A673 (cell line): ENCODE measurements at regions of chr12 and their contacts with region 1.

Region 1: GRCh38 chr12:88993651-88994050 is 358.6 kb downstream of the DUSP6 start:
- DNase-seq: peak; percentile 64
- H3K4me3 ChIP-seq: no peak overlapping the region
- H3K27ac ChIP-seq: no peak overlapping the region
- H3K4me1 ChIP-seq: no peaks in the 10 kb centered on the region
- H3K27me3 ChIP-seq: no peaks in the 10 kb centered on the region
- CTCF ChIP-seq: peak; percentile 70

Region 2: DNA sequence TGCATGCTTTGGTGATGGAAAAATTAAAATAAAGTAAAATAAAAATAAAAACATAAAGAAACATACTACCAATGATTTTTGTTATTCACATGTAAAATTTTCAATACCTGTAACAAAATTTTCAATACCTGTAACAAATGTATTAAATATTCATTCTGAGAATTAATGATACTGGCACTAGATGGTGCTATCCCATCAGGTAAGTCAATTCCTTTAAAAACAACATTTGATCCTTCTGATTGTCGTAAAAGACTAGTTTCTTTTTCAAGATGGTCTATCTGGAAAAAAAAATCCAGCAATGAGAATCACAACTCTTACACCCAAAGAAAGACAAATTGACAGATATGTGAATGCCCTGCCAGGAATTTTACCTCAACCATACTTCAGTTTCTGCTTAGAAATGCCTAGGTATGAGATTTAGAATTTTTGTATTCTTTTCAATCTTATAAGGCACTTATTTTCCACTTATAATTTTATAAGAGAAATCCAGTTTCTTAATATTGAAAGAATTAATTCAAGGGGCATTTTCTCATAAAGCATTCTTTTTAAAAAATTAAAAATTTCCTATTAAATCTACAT is 882.5 kb before region 1 on chr12:
- CTCF ChIA-PET with region 1: no interaction called
- POLR2A ChIA-PET with region 1: no interaction called
- intact Hi-C with region 1: loop called (anchors 2 kb)
- DNase-seq: peak; percentile 49
- H3K4me3 ChIP-seq: no peak overlapping the region
- H3K27ac ChIP-seq: no peak overlapping the region
- H3K4me1 ChIP-seq: no peaks in the 10 kb centered on the region
- H3K27me3 ChIP-seq: no peaks in the 10 kb centered on the region
- CTCF ChIP-seq: peak; percentile 60

Region 3: GRCh38 chr12:88141770-88142609 is 851.7 kb before region 1 on chr12 and contains the starts of genes CEP290 and TMTC3:
- CTCF ChIA-PET with region 1: no interaction called
- POLR2A ChIA-PET with region 1: no interaction called
- intact Hi-C with region 1: loop called (anchors 5 kb)
- DNase-seq: peak; percentile 99
- H3K4me3 ChIP-seq: peak within 1 kb of the TSS; percentile 79
- H3K27ac ChIP-seq: peak within 1 kb of the TSS; percentile 71
- H3K4me1 ChIP-seq: peaks cover 22% of the 10 kb centered on the region
- H3K27me3 ChIP-seq: no peaks in the 10 kb centered on the region
- CTCF ChIP-seq: no peak
- total RNA-seq, gene CEP290: 27.2 and 27.3 TPM in 2 replicates
- total RNA-seq, gene TMTC3: 31.6 and 33.6 TPM in 2 replicates

Region 4: GRCh38 chr12:88633312-88633711 is 360.3 kb before region 1 on chr12:
- CTCF ChIA-PET with region 1: interaction called, 3 read pairs
- POLR2A ChIA-PET with region 1: no interaction called
- intact Hi-C with region 1: loop called (anchors 5 kb)
- DNase-seq: peak; percentile 18
- H3K4me3 ChIP-seq: no peak overlapping the region
- H3K27ac ChIP-seq: no peak overlapping the region
- H3K4me1 ChIP-seq: peaks cover 2% of the 10 kb centered on the region
- H3K27me3 ChIP-seq: no peaks in the 10 kb centered on the region
- CTCF ChIP-seq: peak; percentile 53; the same call in 1 of the 2 replicates

Region 5: DNA sequence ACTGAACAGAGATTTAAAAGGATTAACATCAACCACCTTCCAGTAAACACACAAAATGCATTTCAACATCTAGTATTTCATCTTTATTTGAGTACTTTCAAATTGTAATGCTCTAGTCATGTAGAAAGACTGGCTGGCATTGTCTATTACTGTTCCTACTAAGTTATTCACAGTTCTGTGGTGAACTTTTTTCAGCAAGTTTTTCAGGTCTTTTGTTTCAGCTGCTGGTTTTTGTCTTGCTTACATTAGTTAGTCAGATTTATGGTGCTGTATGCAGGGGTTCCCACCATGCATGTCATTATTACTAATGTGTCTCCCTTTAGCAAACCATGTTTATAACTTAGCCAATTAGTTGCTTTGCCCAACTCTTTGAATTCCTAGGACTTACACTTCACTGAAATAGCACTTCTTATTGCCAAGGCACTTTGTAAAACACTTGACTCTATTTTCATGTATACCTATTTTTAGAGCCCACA is 160.0 kb before region 1 on chr12:
- CTCF ChIA-PET with region 1: no interaction called
- POLR2A ChIA-PET with region 1: no interaction called
- intact Hi-C with region 1: no loop called
- DNase-seq: no peak
- H3K4me3 ChIP-seq: no peak overlapping the region
- H3K27ac ChIP-seq: no peak overlapping the region
- H3K4me1 ChIP-seq: no peaks in the 10 kb centered on the region
- H3K27me3 ChIP-seq: no peaks in the 10 kb centered on the region
- CTCF ChIP-seq: no peak